WTC11 (cell line): ENCODE measurements at regions of chr17 and their contacts with region 1.

Region 1: GRCh38 chr17:82332669-82333278 is 792 bp downstream of the SECTM1 start:
- DNase-seq: no peak
- ATAC-seq: peak; percentile 12; the same call in 1 of the 2 replicates
- H3K4me3 Mint-ChIP-seq: peak overlapping the region; percentile 61
- H3K27ac Mint-ChIP-seq: no peak overlapping the region
- H3K4me1 Mint-ChIP-seq: peaks cover 22% of the 10 kb centered on the region
- H3K27me3 Mint-ChIP-seq: peaks cover 72% of the 10 kb centered on the region
- CTCF ChIP-seq: no peak

Region 2: GRCh38 chr17:82236142-82236981 is 96.4 kb before region 1 on chr17:
- CTCF ChIA-PET with region 1: interaction called, 15 read pairs
- POLR2A ChIA-PET with region 1: no interaction called
- DNase-seq: peak; percentile 79
- ATAC-seq: peak; percentile 41
- H3K4me3 Mint-ChIP-seq: no peak overlapping the region
- H3K27ac Mint-ChIP-seq: peak overlapping the region; percentile 60
- H3K4me1 Mint-ChIP-seq: peaks cover 7% of the 10 kb centered on the region
- H3K27me3 Mint-ChIP-seq: no peaks in the 10 kb centered on the region; the same call in 1 of the 2 replicates
- CTCF ChIP-seq: peak; percentile 88

Region 3: DNA sequence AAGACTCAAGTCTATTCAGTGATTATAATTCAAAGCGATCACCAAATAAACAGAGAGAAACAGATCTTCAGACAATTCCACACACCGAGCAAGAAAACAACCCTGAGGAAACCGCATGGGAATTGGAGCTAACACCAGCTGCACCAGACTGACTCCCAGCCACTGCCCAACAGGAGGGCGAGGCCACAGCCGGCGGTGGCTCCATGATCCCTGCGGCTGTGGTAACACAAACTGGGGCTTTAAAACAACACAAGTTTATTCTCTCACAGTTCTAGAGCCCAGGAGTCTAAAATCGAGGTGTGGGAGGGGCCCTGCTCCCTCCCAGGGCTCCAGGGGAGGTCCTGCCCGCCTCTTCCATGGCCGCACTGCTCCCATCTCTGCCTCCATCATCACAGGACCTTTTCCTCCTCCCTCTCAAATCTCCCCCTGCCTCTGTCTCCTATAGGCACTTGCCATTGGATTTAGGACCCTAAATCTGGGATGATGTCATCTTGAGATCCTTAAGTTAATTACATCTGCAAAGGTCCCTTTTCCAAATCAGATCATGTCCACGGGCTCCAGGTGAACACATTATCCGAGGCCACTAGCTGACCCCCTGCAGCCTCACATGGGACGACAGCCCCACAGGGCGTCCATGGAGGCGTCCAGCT is 75.6 kb after region 1 on chr17:
- CTCF ChIA-PET with region 1: no interaction called
- POLR2A ChIA-PET with region 1: interaction called, 12 read pairs
- DNase-seq: no peak
- ATAC-seq: no peak
- H3K4me3 Mint-ChIP-seq: no peak overlapping the region
- H3K27ac Mint-ChIP-seq: no peak overlapping the region
- H3K4me1 Mint-ChIP-seq: no peaks in the 10 kb centered on the region
- H3K27me3 Mint-ChIP-seq: no peaks in the 10 kb centered on the region
- CTCF ChIP-seq: no peak